CD8-positive, alpha-beta memory T cell (primary cell): ENCODE measurements at regions of chr10 and their contacts with region 1.

Region 1: GRCh38 chr10:102072673-102073527 is 7.8 kb downstream of the HPS6 start:
- DNase-seq: peak; percentile 60 to 82 (median 69)
- H3K4me3 ChIP-seq: no peak overlapping the region
- H3K4me3 Mint-ChIP-seq: no peak overlapping the region
- H3K27ac ChIP-seq: no peak overlapping the region
- H3K27ac Mint-ChIP-seq: no peak overlapping the region
- H3K4me1 ChIP-seq: peaks cover 5% of the 10 kb centered on the region
- H3K4me1 Mint-ChIP-seq: peaks cover 4 to 19% (median 11%) of the 10 kb centered on the region in 3 donors
- H3K27me3 ChIP-seq: no peaks in the 10 kb centered on the region
- H3K27me3 Mint-ChIP-seq: no peaks in the 10 kb centered on the region

Region 2: DNA sequence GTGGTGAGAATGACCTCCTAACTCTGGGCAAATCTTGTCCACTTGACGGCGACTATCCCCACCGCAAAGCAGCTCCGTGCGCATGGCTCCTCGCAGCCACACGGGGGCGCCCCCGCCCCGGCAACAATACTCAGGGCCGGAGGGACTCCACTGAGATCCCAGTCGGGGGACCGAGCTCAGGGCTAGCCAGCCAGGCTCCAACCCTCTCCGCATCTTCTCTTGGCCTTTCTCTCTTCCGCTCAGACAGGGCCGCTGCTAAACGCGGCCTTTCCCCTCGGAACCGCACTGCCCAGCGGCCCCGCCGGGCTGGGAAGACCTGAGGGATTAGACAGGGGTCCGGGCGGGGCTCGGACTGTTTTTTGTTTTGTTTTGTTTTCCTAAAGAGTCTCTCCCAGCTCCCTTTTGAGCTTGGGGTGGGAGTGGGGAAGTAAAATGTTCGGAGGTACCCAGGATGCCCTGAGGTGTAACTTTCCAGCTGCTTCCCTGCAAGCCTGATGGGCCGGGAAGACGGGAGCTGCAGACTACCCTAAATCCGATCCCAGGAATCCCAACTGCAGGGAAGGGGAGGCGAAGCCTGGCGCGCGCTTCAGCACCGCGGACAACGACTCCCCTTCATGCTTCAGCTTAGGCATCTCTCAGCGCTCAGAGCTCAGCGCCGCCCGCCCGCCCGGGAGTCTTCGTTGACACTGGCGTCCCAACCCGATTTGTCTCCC is 232.0 kb before region 1 on chr10:
- CTCF ChIA-PET with region 1: interaction called, 62 read pairs
- POLR2A ChIA-PET with region 1: interaction called, 3 read pairs
- DNase-seq: peak; percentile 58 to 82 (median 64)
- H3K4me3 ChIP-seq: peak overlapping the region; percentile 45
- H3K4me3 Mint-ChIP-seq: peak overlapping the region; percentile 82 to 95 (median 88)
- H3K27ac ChIP-seq: no peak overlapping the region
- H3K27ac Mint-ChIP-seq: peak overlapping the region in 6 of 8 donors; percentile 65 to 95 (median 82)
- H3K4me1 ChIP-seq: peaks cover 48% of the 10 kb centered on the region
- H3K4me1 Mint-ChIP-seq: peaks cover 41 to 62% (median 52%) of the 10 kb centered on the region in 3 donors
- H3K27me3 ChIP-seq: no peaks in the 10 kb centered on the region
- H3K27me3 Mint-ChIP-seq: peaks cover 0 to 7% of the 10 kb centered on the region in 2 donors

Region 3: GRCh38 chr10:102009801-102010425 is 63.0 kb before region 1 on chr10:
- CTCF ChIA-PET with region 1: interaction called, 23 read pairs
- POLR2A ChIA-PET with region 1: no interaction called
- DNase-seq: peak; percentile 1 to 50 (median 41)
- H3K4me3 ChIP-seq: no peak overlapping the region
- H3K4me3 Mint-ChIP-seq: no peak overlapping the region
- H3K27ac ChIP-seq: no peak overlapping the region
- H3K27ac Mint-ChIP-seq: peak overlapping the region in 2 of 8 donors; percentile 66 to 67
- H3K4me1 ChIP-seq: no peaks in the 10 kb centered on the region
- H3K4me1 Mint-ChIP-seq: peaks cover 0 to 3% (median 0%) of the 10 kb centered on the region in 3 donors
- H3K27me3 ChIP-seq: no peaks in the 10 kb centered on the region
- H3K27me3 Mint-ChIP-seq: no peaks in the 10 kb centered on the region

Region 4: DNA sequence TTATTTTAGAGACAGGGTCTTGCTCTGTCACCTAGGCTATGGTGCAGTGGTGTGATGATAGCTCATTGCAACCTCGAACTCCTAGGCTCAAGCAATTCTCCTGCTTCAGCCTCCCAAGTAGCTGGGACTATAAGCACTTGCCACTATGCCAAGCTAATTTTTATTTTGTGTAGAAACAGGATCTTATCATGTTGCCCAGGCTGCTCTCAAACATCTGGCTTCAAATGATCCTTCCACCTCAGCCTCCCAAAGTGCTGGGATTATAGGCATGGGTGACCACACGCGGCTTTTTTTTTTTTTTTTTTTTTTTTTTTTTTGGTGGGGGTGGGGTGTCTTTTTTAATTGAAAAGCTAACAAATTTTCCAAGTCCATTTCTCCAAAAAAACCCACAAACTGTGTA is 10.6 kb after region 1 on chr10:
- CTCF ChIA-PET with region 1: interaction called, 18 read pairs
- POLR2A ChIA-PET with region 1: interaction called, 6 read pairs
- DNase-seq: no peak
- H3K4me3 ChIP-seq: no peak overlapping the region
- H3K4me3 Mint-ChIP-seq: no peak overlapping the region
- H3K27ac ChIP-seq: no peak overlapping the region
- H3K27ac Mint-ChIP-seq: no peak overlapping the region
- H3K4me1 ChIP-seq: no peaks in the 10 kb centered on the region
- H3K4me1 Mint-ChIP-seq: no peaks in the 10 kb centered on the region
- H3K27me3 ChIP-seq: no peaks in the 10 kb centered on the region
- H3K27me3 Mint-ChIP-seq: peaks cover 0 to 2% of the 10 kb centered on the region in 2 donors

Region 5: DNA sequence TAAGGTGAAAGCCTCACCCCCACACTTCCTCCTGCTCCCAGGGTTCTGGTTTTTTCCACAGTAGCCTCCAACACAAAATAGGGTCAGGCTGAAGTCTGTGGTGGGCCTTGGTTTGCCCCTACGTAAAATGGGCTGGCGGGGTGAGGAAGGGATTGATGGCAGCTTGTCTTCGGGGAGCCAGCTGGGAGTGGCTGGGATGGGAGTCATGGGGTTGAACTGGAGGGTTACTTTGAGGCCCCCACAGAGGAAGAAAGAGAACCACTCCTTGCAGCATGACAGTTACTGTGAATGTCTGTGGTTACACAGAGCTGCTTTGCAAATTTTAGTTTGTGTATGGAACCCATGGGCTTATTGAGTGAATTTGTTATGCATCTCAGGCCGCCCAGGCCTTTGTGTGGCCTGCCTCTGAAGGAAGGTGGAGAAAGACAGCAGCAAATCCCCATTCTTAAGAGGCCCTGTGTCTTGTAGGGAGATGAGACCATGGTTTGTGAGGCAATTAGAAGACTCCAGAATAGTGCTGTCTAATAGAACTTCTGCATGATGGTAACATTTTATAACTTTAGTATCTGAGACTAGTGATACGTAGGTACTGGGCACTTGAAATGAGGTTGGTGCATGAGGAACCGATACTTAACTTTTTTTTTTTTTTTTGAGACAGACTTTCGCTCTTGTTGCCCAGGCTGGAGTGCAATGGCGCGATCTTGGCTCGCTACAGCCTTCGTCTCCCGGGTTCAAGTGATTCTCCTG is 579.4 kb after region 1 on chr10:
- CTCF ChIA-PET with region 1: no interaction called
- POLR2A ChIA-PET with region 1: no interaction called
- DNase-seq: peak in 1 of 5 donors; percentile 30
- H3K4me3 ChIP-seq: peak overlapping the region; percentile 17
- H3K4me3 Mint-ChIP-seq: peak overlapping the region; percentile 63 to 88 (median 75)
- H3K27ac ChIP-seq: peak overlapping the region; percentile 20
- H3K27ac Mint-ChIP-seq: peak overlapping the region; percentile 71 to 98 (median 92)
- H3K4me1 ChIP-seq: peaks cover 66% of the 10 kb centered on the region
- H3K4me1 Mint-ChIP-seq: peaks cover 61 to 83% (median 64%) of the 10 kb centered on the region in 3 donors
- H3K27me3 ChIP-seq: no peaks in the 10 kb centered on the region
- H3K27me3 Mint-ChIP-seq: no peaks in the 10 kb centered on the region